ENCODE measurements at regions of chr17 and their contacts with region 1.

Region 1: DNA sequence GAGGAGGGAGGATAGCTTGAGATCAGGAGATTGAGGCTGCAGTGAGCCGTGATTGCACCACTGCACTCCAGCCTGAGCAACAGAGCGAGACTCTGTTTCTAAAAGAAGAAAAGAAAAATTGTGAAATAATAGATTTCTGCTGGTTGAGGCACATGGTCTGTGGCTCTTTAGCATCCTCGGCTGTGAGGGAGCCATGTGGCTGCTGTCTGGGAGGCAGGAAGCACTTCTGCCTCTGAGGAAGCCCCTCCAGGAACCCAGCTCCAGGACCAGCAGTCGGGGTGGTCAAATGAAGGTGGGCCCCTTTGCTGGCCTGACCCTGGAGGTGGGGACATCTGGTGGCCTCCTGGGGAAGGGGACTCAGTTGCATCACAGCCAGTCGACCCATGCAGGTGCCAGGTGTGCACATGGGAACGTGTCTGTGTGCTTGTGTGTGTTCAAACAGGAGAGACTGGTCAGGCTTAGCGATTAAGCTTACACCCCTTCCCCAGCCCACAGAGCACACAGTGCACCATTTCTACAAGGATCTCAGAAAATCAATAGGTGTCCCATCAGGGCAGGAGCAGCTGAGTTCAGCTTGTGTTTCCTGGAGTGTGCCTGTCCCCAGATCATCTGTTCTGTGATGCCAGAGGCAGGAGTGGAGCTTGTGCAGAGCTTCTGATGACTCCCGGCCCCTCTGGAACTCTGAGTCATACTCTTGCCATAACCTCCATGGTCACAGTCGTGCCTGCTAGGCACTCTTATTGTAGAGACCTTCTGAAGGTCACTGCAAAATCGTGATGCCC is 24.3 kb upstream of the MGAT5B start:
- DNase-seq: no peak
- H3K4me3 ChIP-seq: no peak overlapping the region
- H3K27ac ChIP-seq: no peak overlapping the region
- H3K4me1 ChIP-seq: no peaks in the 10 kb centered on the region
- H3K27me3 ChIP-seq: peaks cover 0 to 32% of the 10 kb centered on the region in 2 donors
- CTCF ChIP-seq: no peak
- POLR2A ChIP-seq: no peak

Region 2: DNA sequence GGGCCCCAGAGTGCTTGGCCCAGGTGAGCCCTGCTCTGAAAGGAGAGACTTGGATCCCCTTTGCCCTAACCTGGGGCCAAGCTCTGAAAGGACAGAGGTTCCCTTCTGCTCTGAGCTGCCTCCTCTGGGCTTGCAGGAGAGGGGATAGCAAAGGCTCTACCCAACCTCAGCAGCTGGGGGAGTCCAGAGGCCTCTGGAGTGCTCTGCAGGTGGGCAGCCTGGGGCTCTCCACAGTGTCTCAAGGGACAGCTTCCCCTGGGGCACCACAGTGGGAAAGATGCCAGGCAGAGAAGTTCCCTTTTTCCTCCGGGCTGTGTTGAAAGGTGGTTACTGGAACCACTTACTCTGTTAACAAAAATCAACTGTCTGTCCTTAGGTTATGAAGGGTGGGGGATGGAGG is 23.9 kb before region 1 on chr17:
- intact Hi-C with region 1: loop called (anchors 1 kb)
- DNase-seq: no peak
- H3K4me3 ChIP-seq: no peak overlapping the region
- H3K27ac ChIP-seq: no peak overlapping the region
- H3K4me1 ChIP-seq: no peaks in the 10 kb centered on the region
- H3K27me3 ChIP-seq: no peaks in the 10 kb centered on the region
- CTCF ChIP-seq: no peak
- POLR2A ChIP-seq: no peak